Mammary epithelial cell (primary cell): ENCODE measurements at regions of chr1 and their contacts with region 1.

Region 1: GRCh38 chr1:25858906-25859789 is at the start of gene AUNIP:
- DNase-seq: peak; percentile 89
- H3K4me3 ChIP-seq: peak within 1 kb of the TSS; percentile 37 to 93 (median 88)
- H3K27ac ChIP-seq: peak within 1 kb of the TSS; percentile 73
- H3K4me1 ChIP-seq: peaks cover 9% of the 10 kb centered on the region
- H3K27me3 ChIP-seq: no peaks in the 10 kb centered on the region
- CTCF ChIP-seq: no peak
- total RNA-seq, gene AUNIP: 5.7 to 9.3 TPM

Region 2: GRCh38 chr1:25727635-25728330 is 131.4 kb before region 1 on chr1:
- CTCF ChIA-PET with region 1: no interaction called
- dilution Hi-C with region 1: no loop called
- in situ Hi-C with region 1: no loop called
- intact Hi-C with region 1: no loop called
- DNase-seq: no peak
- H3K4me3 ChIP-seq: no peak overlapping the region
- H3K27ac ChIP-seq: no peak overlapping the region
- H3K4me1 ChIP-seq: peaks cover 15% of the 10 kb centered on the region
- H3K27me3 ChIP-seq: no peaks in the 10 kb centered on the region
- CTCF ChIP-seq: no peak

Region 3: GRCh38 chr1:25810341-25811299 is 48.5 kb before region 1 on chr1:
- CTCF ChIA-PET with region 1: no interaction called
- dilution Hi-C with region 1: no loop called
- in situ Hi-C with region 1: no loop called
- intact Hi-C with region 1: no loop called
- DNase-seq: no peak
- H3K4me3 ChIP-seq: no peak overlapping the region
- H3K27ac ChIP-seq: no peak overlapping the region
- H3K4me1 ChIP-seq: peaks cover 4% of the 10 kb centered on the region
- H3K27me3 ChIP-seq: no peaks in the 10 kb centered on the region
- CTCF ChIP-seq: peak; percentile 75 to 89

Region 4: DNA sequence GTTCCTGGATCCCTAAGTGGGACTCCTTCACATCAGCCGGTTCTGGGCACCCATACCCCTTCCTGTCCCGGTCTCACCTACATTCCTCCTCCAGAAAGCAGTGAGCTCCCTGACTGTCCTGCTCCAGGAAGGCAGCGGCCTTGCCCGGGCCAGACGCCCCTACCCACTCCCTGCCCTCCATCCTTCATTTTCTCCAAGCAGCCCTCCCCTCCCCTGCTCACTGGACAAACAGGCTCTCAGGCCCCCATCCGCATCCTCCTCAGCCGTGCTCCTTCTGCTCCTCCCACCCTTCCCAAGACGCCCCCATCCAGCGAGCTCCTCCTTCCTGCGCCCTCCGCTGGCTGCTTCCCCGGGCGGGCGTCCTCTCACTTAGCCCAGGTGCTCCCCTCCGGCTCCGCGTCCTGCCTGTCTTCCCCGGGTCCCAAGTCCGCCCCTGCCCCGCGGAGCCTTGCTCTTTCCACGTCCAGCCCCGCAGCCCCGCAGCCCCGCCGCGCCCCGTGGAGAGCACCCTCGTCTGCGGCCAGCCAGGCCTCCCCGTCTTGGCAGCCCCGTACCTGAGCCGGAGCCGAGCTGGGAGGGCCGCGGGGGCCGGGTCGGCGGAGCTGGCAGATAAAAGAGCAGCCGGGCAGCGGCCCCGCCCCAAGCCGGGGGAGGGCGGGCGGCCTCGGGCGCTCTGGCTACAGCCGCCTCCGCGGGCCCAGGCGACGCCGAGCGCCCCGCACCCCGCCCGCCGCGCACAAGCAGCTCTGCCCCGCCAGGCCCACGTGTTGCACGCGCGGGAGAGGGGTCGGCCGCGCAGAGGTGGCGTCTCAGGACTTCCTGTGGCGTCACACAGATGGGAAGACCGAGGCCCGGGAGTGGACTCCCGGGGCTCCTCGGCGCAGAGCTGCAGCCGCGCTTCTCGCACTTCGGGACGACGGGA is 16.0 kb after region 1 on chr1 and contains the start of gene PAQR7:
- CTCF ChIA-PET with region 1: no interaction called
- dilution Hi-C with region 1: no loop called
- in situ Hi-C with region 1: no loop called
- intact Hi-C with region 1: loop called (anchors 1 kb)
- DNase-seq: peak; percentile 64
- H3K4me3 ChIP-seq: peak within 1 kb of the TSS; percentile 67 to 79 (median 71)
- H3K27ac ChIP-seq: peak within 1 kb of the TSS; percentile 4
- H3K4me1 ChIP-seq: peaks cover 56% of the 10 kb centered on the region
- H3K27me3 ChIP-seq: no peaks in the 10 kb centered on the region
- CTCF ChIP-seq: peak in 1 of 2 donors; percentile 23
- total RNA-seq, gene PAQR7: 21.6 to 28.3 TPM